ENCODE measurements at regions of chr17 and their contacts with region 1.

Region 1: DNA sequence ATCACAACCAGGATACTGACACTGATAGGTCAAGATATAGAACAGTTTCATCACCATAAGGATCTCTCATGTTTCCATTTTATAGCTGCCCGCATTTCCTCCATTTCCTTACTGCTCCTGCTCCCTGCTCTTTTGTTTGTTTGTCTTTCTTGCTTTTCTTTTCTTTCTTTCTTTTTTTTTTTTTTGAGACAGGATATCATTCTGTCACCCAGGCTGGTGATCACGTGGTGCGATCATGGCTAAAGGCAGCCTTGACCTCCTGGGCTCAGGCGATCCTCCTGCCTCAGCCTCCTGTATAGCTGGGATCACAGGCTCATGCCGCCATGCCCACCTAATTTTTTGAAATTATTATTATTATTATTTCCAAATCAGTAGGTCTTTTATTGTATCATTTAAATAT is 31.7 kb downstream of the PRAC1 start:
- DNase-seq: no peak
- ATAC-seq: no peak
- H3K4me3 ChIP-seq: no peak overlapping the region
- H3K27ac ChIP-seq: no peak overlapping the region
- H3K4me1 ChIP-seq: no peaks in the 10 kb centered on the region
- H3K27me3 ChIP-seq: no peaks in the 10 kb centered on the region
- CTCF ChIP-seq: no peak

Region 2: GRCh38 chr17:48054238-48055185 is 636.1 kb before region 1 on chr17:
- CTCF ChIA-PET with region 1: no interaction called
- POLR2A ChIA-PET with region 1: no interaction called
- in situ Hi-C with region 1: no loop called
- intact Hi-C with region 1: no loop called
- DNase-seq: no peak
- ATAC-seq: peak; percentile 52
- H3K4me3 ChIP-seq: peak overlapping the region in 1 of 2 experiments; percentile 1; a peak in 1 of 4 replicates
- H3K27ac ChIP-seq: peak overlapping the region; percentile 78
- H3K4me1 ChIP-seq: peaks cover 59% of the 10 kb centered on the region
- H3K27me3 ChIP-seq: no peaks in the 10 kb centered on the region
- CTCF ChIP-seq: no peak

Region 3: GRCh38 chr17:48711102-48711501 is 20.4 kb after region 1 on chr17:
- CTCF ChIA-PET with region 1: interaction called, 7 read pairs
- POLR2A ChIA-PET with region 1: interaction called, 13 read pairs
- in situ Hi-C with region 1: no loop called
- intact Hi-C with region 1: no loop called
- DNase-seq: no peak
- ATAC-seq: no peak
- H3K4me3 ChIP-seq: no peak overlapping the region
- H3K27ac ChIP-seq: no peak overlapping the region
- H3K4me1 ChIP-seq: no peaks in the 10 kb centered on the region
- H3K27me3 ChIP-seq: no peaks in the 10 kb centered on the region; the same call in 1 of the 2 replicates
- CTCF ChIP-seq: no peak

Region 4: GRCh38 chr17:49157784-49158183 is 467.1 kb after region 1 on chr17:
- CTCF ChIA-PET with region 1: no interaction called
- POLR2A ChIA-PET with region 1: interaction called, 11 read pairs
- in situ Hi-C with region 1: no loop called
- intact Hi-C with region 1: no loop called
- DNase-seq: no peak
- ATAC-seq: no peak
- H3K4me3 ChIP-seq: no peak overlapping the region
- H3K27ac ChIP-seq: no peak overlapping the region
- H3K4me1 ChIP-seq: no peaks in the 10 kb centered on the region
- H3K27me3 ChIP-seq: 0 out of 2 replicates have a peak, but pooled peaks cover 2% of the 10 kb centered on the region
- CTCF ChIP-seq: no peak